PC-9 (cell line): ENCODE measurements at regions of chr7 and their contacts with region 1.

Region 1: GRCh38 chr7:30564243-30564892 is 30.3 kb upstream of the GARS1 start:
- DNase-seq: peak; percentile 74 to 83
- H3K4me3 ChIP-seq: no peak overlapping the region
- H3K27ac ChIP-seq: no peak overlapping the region
- H3K4me1 ChIP-seq: peaks cover 15% of the 10 kb centered on the region
- H3K27me3 ChIP-seq: no peaks in the 10 kb centered on the region
- CTCF ChIP-seq: peak; percentile 97

Region 2: DNA sequence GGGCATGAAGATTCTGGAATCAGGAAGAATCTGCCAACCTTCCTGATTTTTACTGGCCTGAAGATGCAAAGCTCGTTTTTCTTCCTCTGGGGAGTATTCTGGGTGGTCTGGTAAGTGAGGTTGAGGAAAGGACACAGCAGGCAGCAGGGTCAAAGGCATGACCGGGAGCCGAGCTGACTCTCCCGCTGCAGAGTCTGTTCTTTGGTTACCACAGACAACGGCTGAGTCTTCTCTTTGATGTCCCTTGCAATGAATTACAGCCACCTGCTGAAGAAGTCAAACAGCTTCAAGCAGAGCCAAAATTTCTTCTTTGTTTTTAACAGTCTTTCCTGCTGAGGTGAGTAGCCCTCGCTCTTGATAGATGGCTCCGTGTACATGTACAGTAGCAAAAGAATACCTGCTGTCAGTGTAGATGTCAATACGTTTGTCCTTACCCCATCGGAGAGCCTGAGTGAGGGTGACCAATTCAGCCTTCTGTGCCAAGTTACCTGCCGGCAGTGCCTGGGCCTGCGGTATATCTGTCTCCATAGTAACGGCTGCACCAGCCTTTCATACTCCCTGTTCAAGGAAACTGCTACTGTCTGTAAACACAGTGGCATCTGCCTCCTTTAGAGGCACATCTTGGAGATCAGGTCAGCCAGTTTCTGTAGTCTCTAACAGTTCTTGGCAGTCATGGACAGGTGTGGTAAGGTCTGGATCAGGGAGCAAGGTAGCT is 924.3 kb before region 1 on chr7:
- CTCF ChIA-PET with region 1: no interaction called
- POLR2A ChIA-PET with region 1: no interaction called
- intact Hi-C with region 1: loop called (anchors 10 kb)
- DNase-seq: no peak
- H3K4me3 ChIP-seq: no peak overlapping the region
- H3K27ac ChIP-seq: no peak overlapping the region
- H3K4me1 ChIP-seq: peaks cover 14% of the 10 kb centered on the region
- H3K27me3 ChIP-seq: no peaks in the 10 kb centered on the region
- CTCF ChIP-seq: no peak

Region 3: GRCh38 chr7:29988424-29989256 is 575.7 kb before region 1 on chr7:
- CTCF ChIA-PET with region 1: no interaction called
- POLR2A ChIA-PET with region 1: no interaction called
- intact Hi-C with region 1: loop called (anchors 5 kb)
- DNase-seq: peak in 1 of 2 experiments; percentile 36
- H3K4me3 ChIP-seq: peak overlapping the region; percentile 95
- H3K27ac ChIP-seq: peak overlapping the region; percentile 87
- H3K4me1 ChIP-seq: peaks cover 37% of the 10 kb centered on the region
- H3K27me3 ChIP-seq: no peaks in the 10 kb centered on the region
- CTCF ChIP-seq: no peak

Region 4: DNA sequence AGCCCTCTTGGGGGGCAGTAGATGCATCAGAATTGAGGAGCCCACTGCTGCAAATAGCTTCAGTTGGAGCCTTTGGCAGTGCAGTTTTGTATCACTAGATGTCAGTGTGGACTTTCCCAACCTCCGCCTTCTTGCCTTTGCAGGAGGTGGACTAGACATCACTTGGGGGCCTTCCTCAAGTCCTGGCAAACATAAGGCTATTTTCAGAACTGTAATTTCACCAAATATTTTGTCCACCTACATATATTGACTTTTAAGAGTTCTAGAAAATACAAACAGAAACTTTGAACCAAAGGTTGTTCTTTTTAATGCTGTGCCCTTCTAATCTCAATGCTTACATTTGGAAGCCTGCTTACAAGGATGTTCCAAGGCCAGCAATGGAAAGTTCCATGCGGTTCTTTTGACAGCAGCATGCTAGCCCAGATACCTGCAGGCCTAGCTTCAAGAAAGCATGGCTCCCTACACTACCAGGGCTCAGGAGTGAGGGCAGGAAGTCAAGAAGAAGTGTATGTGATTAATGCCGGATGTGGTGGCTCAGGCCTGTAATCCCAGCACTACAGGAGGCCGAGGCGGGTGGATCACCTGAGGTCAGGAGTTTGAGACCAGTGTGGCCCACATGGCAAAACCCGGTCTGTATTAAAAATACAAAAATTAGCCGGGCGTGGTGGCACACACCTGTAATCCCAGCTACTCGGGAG is 288.0 kb before region 1 on chr7:
- CTCF ChIA-PET with region 1: interaction called, 8 read pairs
- POLR2A ChIA-PET with region 1: no interaction called
- intact Hi-C with region 1: loop called (anchors 1 kb)
- DNase-seq: peak in 1 of 2 experiments; percentile 37
- H3K4me3 ChIP-seq: no peak overlapping the region
- H3K27ac ChIP-seq: no peak overlapping the region
- H3K4me1 ChIP-seq: no peaks in the 10 kb centered on the region
- H3K27me3 ChIP-seq: no peaks in the 10 kb centered on the region
- CTCF ChIP-seq: peak; percentile 73

Region 5: GRCh38 chr7:30478349-30479201 is 85.8 kb before region 1 on chr7 and contains the start of gene NOD1:
- CTCF ChIA-PET with region 1: no interaction called
- POLR2A ChIA-PET with region 1: no interaction called
- intact Hi-C with region 1: loop called (anchors 5 kb)
- DNase-seq: peak; percentile 73 to 85
- H3K4me3 ChIP-seq: peak within 1 kb of the TSS; percentile 73
- H3K27ac ChIP-seq: peak within 1 kb of the TSS; percentile 76
- H3K4me1 ChIP-seq: peaks cover 21% of the 10 kb centered on the region
- H3K27me3 ChIP-seq: no peaks in the 10 kb centered on the region
- CTCF ChIP-seq: no peak; the same call in 1 of the 2 replicates
- total RNA-seq, gene NOD1: 16.5 and 20.5 TPM in 2 replicates

Region 6: DNA sequence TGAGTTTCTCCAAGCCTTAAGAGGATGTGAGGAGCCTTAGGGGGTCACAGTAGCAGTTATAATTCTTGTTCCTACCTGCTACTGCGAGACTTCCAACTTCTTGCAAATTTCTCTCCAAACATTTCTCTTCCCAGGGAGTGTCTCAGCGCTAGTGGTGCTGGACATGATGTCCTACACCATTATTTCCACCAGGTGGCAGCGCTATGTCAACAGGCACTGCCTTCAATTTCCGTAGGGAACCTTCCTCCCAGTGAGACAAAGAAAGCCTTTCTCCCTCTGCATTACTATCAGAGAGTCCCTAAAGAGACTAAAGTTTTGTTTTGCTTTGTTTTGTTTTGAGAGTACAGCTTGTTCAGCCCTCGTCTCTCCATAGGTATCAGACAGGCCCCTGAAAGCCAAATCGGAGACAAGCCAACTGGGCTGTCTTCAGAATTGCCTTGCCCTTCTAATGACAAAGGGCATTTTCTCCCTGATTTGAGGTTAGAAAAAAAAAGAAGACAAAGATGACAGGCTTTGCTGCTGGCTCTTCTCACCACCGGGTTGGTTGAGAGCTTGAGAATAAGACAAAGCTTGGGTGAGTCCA is 15.5 kb before region 1 on chr7:
- CTCF ChIA-PET with region 1: interaction called, 20 read pairs
- POLR2A ChIA-PET with region 1: no interaction called
- intact Hi-C with region 1: loop called (anchors 1 kb)
- DNase-seq: peak; percentile 61 to 73
- H3K4me3 ChIP-seq: no peak overlapping the region
- H3K27ac ChIP-seq: no peak overlapping the region
- H3K4me1 ChIP-seq: peaks cover 32% of the 10 kb centered on the region
- H3K27me3 ChIP-seq: no peaks in the 10 kb centered on the region
- CTCF ChIP-seq: peak; percentile 93